Aorta (tissue), 5 donors: ENCODE measurements at regions of chr5 and their contacts with region 1.

Region 1: GRCh38 chr5:54646356-54647101 is 129.0 kb downstream of the SNX18 start:
- DNase-seq: peak; percentile 84 to 93
- ATAC-seq: peak; percentile 85
- H3K4me3 ChIP-seq: peak overlapping the region in 1 of 2 donors; percentile 65
- H3K27ac ChIP-seq: peak overlapping the region; percentile 96 to 99
- H3K4me1 ChIP-seq: peaks cover 3 to 21% of the 10 kb centered on the region in 2 donors
- H3K27me3 ChIP-seq: no peaks in the 10 kb centered on the region

Region 2: GRCh38 chr5:54610197-54610944 is 36.2 kb before region 1 on chr5:
- intact Hi-C with region 1: no loop called
- DNase-seq: no peak
- ATAC-seq: no peak
- H3K4me3 ChIP-seq: no peak overlapping the region
- H3K27ac ChIP-seq: no peak overlapping the region
- H3K4me1 ChIP-seq: peaks cover 1 to 5% of the 10 kb centered on the region in 2 donors
- H3K27me3 ChIP-seq: no peaks in the 10 kb centered on the region

Region 3: GRCh38 chr5:54792611-54793404 is 146.3 kb after region 1 on chr5:
- intact Hi-C with region 1: no loop called
- DNase-seq: peak; percentile 59 to 62
- ATAC-seq: peak; percentile 74
- H3K4me3 ChIP-seq: no peak overlapping the region
- H3K27ac ChIP-seq: peak overlapping the region; percentile 22 to 69
- H3K4me1 ChIP-seq: peaks cover 4 to 6% of the 10 kb centered on the region in 2 donors
- H3K27me3 ChIP-seq: no peaks in the 10 kb centered on the region

Region 4: DNA sequence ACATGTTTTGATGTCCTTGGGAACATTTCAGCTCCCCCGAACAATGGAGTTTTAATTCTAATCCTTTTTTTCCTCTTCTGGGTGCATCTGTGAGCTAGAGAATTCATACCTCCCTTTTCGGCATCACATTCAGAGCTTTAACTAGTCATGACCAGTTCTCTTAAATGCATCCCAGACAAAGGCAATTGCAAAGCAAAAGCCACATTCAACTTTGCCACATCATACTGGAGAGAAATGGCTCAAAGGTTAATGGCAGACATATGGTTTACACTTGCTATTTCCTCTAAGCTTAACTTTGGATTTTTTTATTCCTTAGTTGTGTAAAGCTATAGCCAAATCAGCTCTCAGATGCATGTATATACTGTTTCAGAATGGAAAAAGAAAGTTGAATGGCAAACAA is 185.5 kb after region 1 on chr5:
- intact Hi-C with region 1: loop called in 1 of 2 experiments (anchors 1 kb)
- DNase-seq: no peak
- ATAC-seq: no peak
- H3K4me3 ChIP-seq: no peak overlapping the region
- H3K27ac ChIP-seq: no peak overlapping the region
- H3K4me1 ChIP-seq: no peaks in the 10 kb centered on the region
- H3K27me3 ChIP-seq: no peaks in the 10 kb centered on the region